ENCODE measurements at regions of chr2 and their contacts with region 1.

Region 1: GRCh38 chr2:175181104-175181876 is at the start of gene ATP5MC3:
- DNase-seq: peak; percentile 82 to 95 (median 88)
- ATAC-seq: peak; percentile 85 to 86
- H3K4me3 Mint-ChIP-seq: peak within 1 kb of the TSS; percentile 81 to 98 (median 92)
- H3K27ac Mint-ChIP-seq: peak within 1 kb of the TSS; percentile 85 to 99 (median 94)
- H3K4me1 Mint-ChIP-seq: peaks cover 14 to 32% (median 25%) of the 10 kb centered on the region in 4 donors
- H3K27me3 Mint-ChIP-seq: no peaks in the 10 kb centered on the region
- polyA plus RNA-seq, gene ATP5MC3: 363 to 420 (median 406) TPM

Region 2: GRCh38 chr2:175154661-175155082 is 26.6 kb before region 1 on chr2:
- POLR2A ChIA-PET with region 1: no interaction called
- DNase-seq: no peak
- ATAC-seq: no peak
- H3K4me3 Mint-ChIP-seq: no peak overlapping the region
- H3K27ac Mint-ChIP-seq: peak overlapping the region in 2 of 10 donors; percentile 64 to 85
- H3K4me1 Mint-ChIP-seq: peaks cover 9 to 59% (median 52%) of the 10 kb centered on the region in 4 donors
- H3K27me3 Mint-ChIP-seq: no peaks in the 10 kb centered on the region

Region 3: GRCh38 chr2:175167792-175168563 is 13.3 kb before region 1 on chr2 and contains the start of gene ATF2:
- POLR2A ChIA-PET with region 1: interaction called, 26 read pairs
- DNase-seq: peak; percentile 92 to 100 (median 98)
- ATAC-seq: peak; percentile 89 to 90
- H3K4me3 Mint-ChIP-seq: peak within 1 kb of the TSS; percentile 92 to 100 (median 100)
- H3K27ac Mint-ChIP-seq: peak within 1 kb of the TSS; percentile 95 to 100 (median 99)
- H3K4me1 Mint-ChIP-seq: peaks cover 16 to 57% (median 38%) of the 10 kb centered on the region in 4 donors
- H3K27me3 Mint-ChIP-seq: no peaks in the 10 kb centered on the region
- polyA plus RNA-seq, gene ATF2: 19.5 to 36.5 (median 27.6) TPM

Region 4: GRCh38 chr2:175195012-175195411 is 13.7 kb after region 1 on chr2:
- POLR2A ChIA-PET with region 1: no interaction called
- DNase-seq: no peak
- ATAC-seq: no peak
- H3K4me3 Mint-ChIP-seq: no peak overlapping the region
- H3K27ac Mint-ChIP-seq: no peak overlapping the region
- H3K4me1 Mint-ChIP-seq: no peaks in the 10 kb centered on the region
- H3K27me3 Mint-ChIP-seq: peaks cover 22 to 50% (median 23%) of the 10 kb centered on the region in 5 donors

Region 5: DNA sequence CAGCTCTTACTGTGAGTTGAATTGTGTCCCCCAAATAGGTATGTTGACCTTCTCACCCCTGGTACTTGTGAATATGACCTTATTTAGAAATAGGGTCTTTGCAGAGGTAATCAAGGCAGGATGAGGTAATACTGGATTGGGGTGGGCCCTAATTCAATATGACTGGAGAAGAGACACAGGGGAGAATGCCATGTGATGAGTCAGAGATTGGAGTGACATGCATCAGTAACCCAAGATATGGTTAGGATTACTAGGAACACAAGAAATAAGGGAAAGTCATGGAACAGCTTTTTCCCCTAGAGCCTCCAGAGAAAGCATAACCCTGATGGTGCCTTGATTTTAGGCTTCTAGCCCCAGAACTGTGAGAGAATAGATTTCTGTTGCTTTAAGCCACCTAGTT is 37.3 kb after region 1 on chr2:
- POLR2A ChIA-PET with region 1: no interaction called
- DNase-seq: no peak
- ATAC-seq: no peak
- H3K4me3 Mint-ChIP-seq: no peak overlapping the region
- H3K27ac Mint-ChIP-seq: no peak overlapping the region
- H3K4me1 Mint-ChIP-seq: no peaks in the 10 kb centered on the region
- H3K27me3 Mint-ChIP-seq: peaks cover 14 to 31% (median 25%) of the 10 kb centered on the region in 5 donors

Measured in naive thymus-derived CD8-positive, alpha-beta T cell (primary cell).